ENCODE measurements at regions of chr17 and their contacts with region 1.

Region 1: GRCh38 chr17:39730095-39730921 is at the start of gene MIEN1:
- DNase-seq: peak; percentile 99
- H3K4me3 Mint-ChIP-seq: peak within 1 kb of the TSS; percentile 95
- H3K27ac Mint-ChIP-seq: peak within 1 kb of the TSS; percentile 92
- H3K4me1 Mint-ChIP-seq: peaks cover 16% of the 10 kb centered on the region
- H3K27me3 Mint-ChIP-seq: peaks cover 2% of the 10 kb centered on the region
- total RNA-seq, gene MIEN1: 29.8 and 33.4 TPM in 2 replicates

Region 2: DNA sequence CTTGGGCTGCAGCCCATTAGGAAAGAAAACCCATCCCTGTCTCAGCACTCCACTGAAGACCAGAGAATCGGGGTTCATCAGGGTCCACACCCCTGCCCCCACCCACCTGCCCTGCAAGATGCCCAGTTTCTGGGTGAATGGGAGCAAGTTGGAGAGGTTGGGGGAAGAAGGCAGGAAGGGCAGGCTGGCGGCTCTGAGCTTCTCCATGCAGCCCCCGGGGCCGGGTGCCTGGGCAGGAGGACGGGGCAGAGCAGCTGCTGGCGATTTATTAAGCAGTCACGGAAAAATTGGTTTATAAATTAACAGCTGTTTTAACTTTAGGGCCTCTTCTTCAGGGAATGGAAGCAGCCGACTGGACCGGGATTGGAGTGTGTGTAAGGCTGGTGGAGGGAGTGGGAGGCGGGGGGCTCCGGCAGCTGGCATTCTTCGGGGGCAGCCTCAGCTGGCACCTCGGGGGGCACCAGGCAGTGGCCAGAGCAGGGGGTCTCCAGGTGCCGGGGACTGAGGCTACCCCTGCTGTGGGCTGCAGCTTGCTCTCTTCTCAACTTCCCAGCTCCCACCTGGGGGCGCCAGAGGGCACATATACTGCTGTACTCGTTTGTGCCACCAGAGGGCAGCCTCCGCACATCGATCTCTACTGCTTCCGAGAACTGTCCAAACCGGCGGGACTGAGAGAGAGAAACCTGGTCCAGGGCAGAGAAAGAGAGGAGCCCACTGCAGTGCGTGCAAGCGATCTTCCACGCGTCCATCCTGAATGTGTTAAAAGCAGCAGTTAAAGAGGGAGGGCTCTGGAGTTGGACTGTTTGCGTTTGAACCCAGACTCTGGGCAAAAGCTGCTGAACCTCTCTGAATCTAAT is 108.6 kb before region 1 on chr17:
- intact Hi-C with region 1: loop called (anchors 1 kb)
- DNase-seq: peak; percentile 97
- H3K4me3 Mint-ChIP-seq: peak overlapping the region; percentile 76
- H3K27ac Mint-ChIP-seq: peak overlapping the region; percentile 62
- H3K4me1 Mint-ChIP-seq: peaks cover 17% of the 10 kb centered on the region
- H3K27me3 Mint-ChIP-seq: peaks cover 57% of the 10 kb centered on the region

Region 3: DNA sequence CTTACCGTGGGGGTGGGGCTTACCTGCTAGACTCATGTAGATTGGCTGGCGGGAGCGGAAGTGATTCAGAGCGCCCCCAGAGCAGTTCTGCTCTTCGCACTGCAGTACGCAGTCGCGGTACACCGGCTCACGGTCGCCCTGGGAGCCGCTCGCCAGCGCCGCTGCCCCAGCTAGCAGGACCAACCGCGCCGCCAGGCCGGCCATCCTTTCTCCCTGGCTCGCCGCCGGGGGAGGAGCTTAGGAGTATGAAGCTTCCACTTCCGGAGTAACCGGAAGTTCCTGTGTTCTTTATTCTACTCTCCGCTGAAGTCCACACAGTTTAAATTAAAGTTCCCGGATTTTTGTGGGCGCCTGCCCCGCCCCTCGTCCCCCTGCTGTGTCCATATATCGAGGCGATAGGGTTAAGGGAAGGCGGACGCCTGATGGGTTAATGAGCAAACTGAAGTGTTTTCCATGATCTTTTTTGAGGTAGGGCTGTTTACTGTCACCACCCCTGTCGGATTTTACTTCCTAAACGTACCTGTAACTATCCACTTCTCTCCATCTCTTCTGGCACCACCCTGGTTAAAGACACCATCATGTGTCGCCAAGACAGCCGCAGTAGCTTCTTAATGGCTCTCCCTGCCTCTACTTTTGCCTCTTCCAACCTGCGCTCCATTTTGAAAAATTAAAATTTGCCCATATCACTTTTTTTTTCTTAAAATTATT is 42.3 kb before region 1 on chr17 and contains the start of gene PGAP3:
- intact Hi-C with region 1: loop called (anchors 5 kb)
- DNase-seq: peak; percentile 94
- H3K4me3 Mint-ChIP-seq: peak within 1 kb of the TSS; percentile 95
- H3K27ac Mint-ChIP-seq: peak within 1 kb of the TSS; percentile 92
- H3K4me1 Mint-ChIP-seq: peaks cover 14% of the 10 kb centered on the region
- H3K27me3 Mint-ChIP-seq: no peaks in the 10 kb centered on the region
- total RNA-seq, gene PGAP3: 12.5 and 13.5 TPM in 2 replicates